PC-3 (cell line): ENCODE measurements at regions of chr6 and their contacts with region 1.

Region 1: DNA sequence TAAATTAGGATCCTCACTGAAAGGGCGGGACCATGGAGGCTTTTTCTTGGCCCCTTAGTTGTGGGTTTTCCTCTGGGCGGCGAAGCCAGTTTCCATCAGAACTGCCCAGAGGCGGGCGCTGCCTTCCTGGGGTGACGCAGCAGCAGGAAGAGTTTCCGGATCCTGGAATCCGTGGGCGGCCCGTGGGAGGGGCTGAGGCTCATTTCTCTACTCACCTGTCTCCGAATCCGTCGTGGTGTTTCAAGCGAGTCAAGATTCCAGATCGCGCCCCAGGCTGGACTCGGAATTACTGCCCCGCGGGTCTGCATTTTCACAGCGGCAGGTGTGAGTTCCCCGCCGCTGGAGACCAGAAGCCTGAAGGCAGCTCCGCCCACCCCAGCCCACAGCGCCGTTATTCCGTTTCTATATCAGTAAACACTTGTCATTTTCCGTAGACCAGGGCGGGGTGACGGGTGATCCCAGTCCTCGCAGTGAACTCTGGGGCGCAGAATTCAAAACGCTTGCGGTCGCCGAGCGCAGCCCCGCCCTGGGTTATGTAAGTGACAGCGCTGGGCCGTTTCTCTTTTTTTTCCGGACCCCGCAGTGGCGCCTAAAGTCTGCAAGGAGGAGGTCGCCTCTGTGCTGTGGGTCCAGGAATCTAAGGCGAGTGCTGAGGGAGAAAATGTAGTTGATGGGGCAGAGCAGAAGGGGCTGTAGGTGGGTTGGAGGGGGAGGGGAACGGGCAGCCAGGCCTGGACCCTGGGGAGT is 27.2 kb upstream of the POU5F1 start:
- DNase-seq: peak; percentile 87
- ATAC-seq: peak; percentile 84
- H3K4me3 ChIP-seq: peak overlapping the region; percentile 80
- H3K27ac ChIP-seq: peak overlapping the region; percentile 83
- H3K4me1 ChIP-seq: peaks cover 15% of the 10 kb centered on the region
- H3K27me3 ChIP-seq: no peaks in the 10 kb centered on the region
- CTCF ChIP-seq: no peak

Region 2: DNA sequence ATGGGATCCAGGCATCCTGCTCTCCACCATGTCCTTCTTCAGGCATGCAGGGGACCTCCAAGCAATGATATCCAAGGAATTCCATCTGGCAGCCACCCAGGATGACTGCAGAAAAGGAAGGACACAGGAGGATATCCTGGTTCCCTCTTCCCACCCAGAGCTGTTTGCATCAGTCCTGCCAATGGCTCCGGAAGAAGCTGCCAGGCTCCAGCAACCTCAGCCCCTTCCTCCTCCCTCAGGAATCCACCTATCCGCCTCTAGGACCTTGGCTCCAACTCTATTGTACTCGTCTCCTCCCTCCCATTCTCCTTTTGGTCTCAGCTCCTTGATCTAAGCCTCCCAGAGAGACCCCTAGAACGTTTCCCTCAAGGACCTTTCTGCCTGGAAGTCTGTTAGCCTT is 58.1 kb before region 1 on chr6:
- CTCF ChIA-PET with region 1: no interaction called
- POLR2A ChIA-PET with region 1: no interaction called
- intact Hi-C with region 1: loop called (anchors 1 kb)
- DNase-seq: peak; percentile 30
- ATAC-seq: no peak
- H3K4me3 ChIP-seq: no peak overlapping the region
- H3K27ac ChIP-seq: no peak overlapping the region
- H3K4me1 ChIP-seq: peaks cover 4% of the 10 kb centered on the region; the same call in 1 of the 2 replicates
- H3K27me3 ChIP-seq: no peaks in the 10 kb centered on the region
- CTCF ChIP-seq: no peak

Region 3: DNA sequence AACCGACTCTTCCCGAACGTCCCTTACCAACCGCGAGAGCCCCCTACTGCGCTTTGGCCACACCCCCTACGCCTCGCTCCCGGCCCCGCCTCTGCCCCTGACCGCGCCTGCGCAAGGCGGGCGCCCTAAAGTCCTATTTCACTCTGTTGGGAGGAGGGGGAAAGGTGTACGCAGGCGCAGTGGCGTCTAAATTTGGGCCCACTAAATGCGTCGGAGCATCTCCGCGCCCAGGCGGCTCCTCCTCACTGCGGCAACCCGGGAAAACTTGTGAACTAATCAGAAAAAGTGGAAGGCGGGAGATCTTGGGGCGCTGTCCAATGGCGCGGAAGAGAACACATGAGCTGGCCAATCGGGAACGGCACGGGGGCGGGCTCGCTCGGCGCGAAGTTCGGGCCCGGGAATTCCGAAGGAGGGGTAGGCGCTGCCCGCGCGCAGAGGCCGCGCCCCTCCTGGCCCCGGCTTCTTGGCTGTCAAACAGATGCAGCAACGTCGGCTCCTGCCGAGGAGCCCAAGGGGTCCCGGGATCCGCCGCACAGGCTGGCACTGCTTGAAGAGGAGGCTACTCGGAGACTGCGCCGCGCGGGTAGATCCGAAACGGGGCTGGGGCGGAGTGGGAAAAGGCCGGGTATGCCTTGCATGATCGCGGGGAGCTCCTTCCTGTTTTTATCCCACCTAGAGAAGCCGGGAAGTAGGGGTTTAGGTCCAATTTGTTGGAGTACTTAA is 39.4 kb before region 1 on chr6 and contains the start of gene TCF19:
- CTCF ChIA-PET with region 1: interaction called, 9 read pairs
- POLR2A ChIA-PET with region 1: interaction called, 5 read pairs
- intact Hi-C with region 1: loop called (anchors 2 kb)
- DNase-seq: peak; percentile 99
- ATAC-seq: peak; percentile 88
- H3K4me3 ChIP-seq: peak within 1 kb of the TSS; percentile 88
- H3K27ac ChIP-seq: peak within 1 kb of the TSS; percentile 4; the same call in 1 of the 2 replicates
- H3K4me1 ChIP-seq: peaks cover 17% of the 10 kb centered on the region
- H3K27me3 ChIP-seq: no peaks in the 10 kb centered on the region
- CTCF ChIP-seq: no peak
- total RNA-seq, gene TCF19: 79.0 and 88.6 TPM in 2 replicates

Region 4: DNA sequence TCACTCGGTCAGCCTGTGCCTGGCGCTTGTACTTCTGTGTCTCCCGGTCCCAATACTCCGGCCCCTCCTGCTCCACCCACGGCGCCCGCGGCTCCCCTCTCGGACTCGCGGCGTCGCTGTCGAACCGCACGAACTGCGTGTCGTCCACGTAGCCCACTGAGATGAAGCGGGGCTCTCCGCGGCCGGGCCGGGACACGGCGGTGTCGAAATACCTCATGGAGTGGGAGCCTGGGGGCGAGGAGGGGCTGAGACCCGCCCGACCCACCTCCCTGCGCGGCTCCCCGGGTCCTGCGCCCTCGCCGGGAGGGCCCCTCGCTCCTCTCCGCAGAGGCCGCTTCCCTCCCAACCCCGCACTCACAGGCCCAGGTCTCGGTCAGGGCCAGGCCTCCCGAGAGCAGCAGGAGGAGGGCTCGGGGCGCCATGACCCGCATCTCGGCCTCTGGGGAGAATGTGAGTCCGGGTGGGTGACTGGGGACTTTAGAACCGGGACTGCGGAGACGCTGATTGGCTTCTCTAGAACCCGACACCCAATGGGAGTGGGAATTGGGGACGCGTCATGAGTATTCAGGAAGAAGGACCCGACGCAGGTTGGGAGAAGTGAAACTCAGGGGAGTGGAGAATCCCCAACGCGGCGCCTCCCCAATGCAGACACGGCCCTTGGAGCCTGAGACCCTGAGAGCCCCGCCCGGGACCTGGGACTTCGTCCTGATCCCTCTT is 74.1 kb after region 1 on chr6 and contains the start of gene HLA-C:
- CTCF ChIA-PET with region 1: no interaction called
- POLR2A ChIA-PET with region 1: no interaction called
- intact Hi-C with region 1: loop called (anchors 2 kb)
- DNase-seq: peak; percentile 96
- ATAC-seq: peak; percentile 99
- H3K4me3 ChIP-seq: peak within 1 kb of the TSS; percentile 84
- H3K27ac ChIP-seq: no peak within 1 kb of the TSS
- H3K4me1 ChIP-seq: peaks cover 3% of the 10 kb centered on the region; the same call in 1 of the 2 replicates
- H3K27me3 ChIP-seq: peaks cover 8% of the 10 kb centered on the region; the same call in 1 of the 2 replicates
- CTCF ChIP-seq: no peak
- total RNA-seq, gene HLA-C: 219 and 252 TPM in 2 replicates

Region 5: GRCh38 chr6:31366693-31367470 is 169.2 kb after region 1 on chr6:
- CTCF ChIA-PET with region 1: interaction called, 7 read pairs
- POLR2A ChIA-PET with region 1: no interaction called
- intact Hi-C with region 1: loop called (anchors 1 kb)
- DNase-seq: peak; percentile 96
- ATAC-seq: peak; percentile 99
- H3K4me3 ChIP-seq: peak overlapping the region; percentile 65
- H3K27ac ChIP-seq: no peak overlapping the region
- H3K4me1 ChIP-seq: peaks cover 8% of the 10 kb centered on the region; the same call in 1 of the 2 replicates
- H3K27me3 ChIP-seq: peaks cover 21% of the 10 kb centered on the region
- CTCF ChIP-seq: peak; percentile 94